ENCODE measurements at regions of chr14 and their contacts with region 1.

Region 1: GRCh38 chr14:73825551-73826188 is 26.0 kb upstream of the PTGR2 start:
- DNase-seq: peak; percentile 91
- ATAC-seq: peak; percentile 79
- H3K4me3 Mint-ChIP-seq: no peak overlapping the region
- H3K27ac Mint-ChIP-seq: no peak overlapping the region
- H3K4me1 Mint-ChIP-seq: peaks cover 18% of the 10 kb centered on the region
- H3K27me3 Mint-ChIP-seq: no peaks in the 10 kb centered on the region

Region 2: DNA sequence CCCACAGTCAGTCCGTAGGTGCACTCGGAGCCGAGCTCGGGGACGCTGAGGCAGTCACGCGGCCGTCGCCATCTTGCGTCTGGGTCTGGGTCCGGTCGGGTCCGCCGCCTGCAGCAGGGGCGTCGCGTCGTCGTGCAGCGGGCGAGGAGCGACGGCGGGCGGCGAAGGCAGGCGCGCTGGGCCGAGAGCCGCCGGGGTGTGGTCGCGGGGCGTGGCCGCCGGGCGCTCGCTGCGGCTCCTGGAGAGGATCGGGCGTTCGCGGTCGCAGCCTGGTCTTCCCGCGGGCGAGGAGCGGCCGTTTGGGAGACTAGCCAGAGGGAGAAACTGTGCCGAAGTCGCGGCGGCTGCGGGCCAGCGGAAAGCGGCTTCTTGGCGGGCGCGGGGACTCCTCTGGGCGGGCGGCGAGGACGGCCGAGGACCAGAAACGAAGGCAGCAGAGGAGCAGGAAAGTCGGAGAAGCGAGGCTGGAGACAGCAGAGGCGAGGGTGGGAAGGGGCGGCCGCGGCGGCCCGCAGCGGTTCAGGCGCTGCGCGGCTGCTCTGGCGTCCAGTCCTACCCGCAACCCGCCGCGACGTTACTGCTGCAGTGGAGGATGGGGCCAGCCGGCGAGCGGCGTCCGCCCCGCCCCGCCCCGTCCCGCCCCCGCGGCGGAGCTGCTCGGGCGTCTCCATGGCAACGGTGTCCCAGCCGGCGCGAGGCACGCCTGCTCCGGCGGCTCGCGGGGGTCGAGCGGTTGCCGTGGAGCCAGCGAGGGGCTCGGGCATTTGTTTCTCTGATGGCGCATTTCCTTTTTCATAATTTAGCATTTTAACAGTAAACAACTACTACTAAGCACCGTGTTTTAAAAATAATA is 111.6 kb before region 1 on chr14 and contains the start of gene PNMA1:
- CTCF ChIA-PET with region 1: interaction called, 3 read pairs
- POLR2A ChIA-PET with region 1: no interaction called
- intact Hi-C with region 1: loop called in 1 of 2 experiments (anchors 5 kb)
- DNase-seq: peak; percentile 92
- ATAC-seq: peak; percentile 79
- H3K4me3 Mint-ChIP-seq: peak within 1 kb of the TSS; percentile 98
- H3K27ac Mint-ChIP-seq: peak within 1 kb of the TSS; percentile 94
- H3K4me1 Mint-ChIP-seq: peaks cover 13% of the 10 kb centered on the region
- H3K27me3 Mint-ChIP-seq: no peaks in the 10 kb centered on the region
- total RNA-seq, gene PNMA1: 23.2 to 28.8 TPM

Region 3: GRCh38 chr14:73741386-73741875 is 84.2 kb before region 1 on chr14:
- CTCF ChIA-PET with region 1: interaction called, 6 read pairs
- POLR2A ChIA-PET with region 1: no interaction called
- intact Hi-C with region 1: loop called in 1 of 2 experiments (anchors 5 kb)
- DNase-seq: peak; percentile 85
- ATAC-seq: peak; percentile 80
- H3K4me3 Mint-ChIP-seq: peak overlapping the region; percentile 66
- H3K27ac Mint-ChIP-seq: peak overlapping the region; percentile 82
- H3K4me1 Mint-ChIP-seq: peaks cover 65% of the 10 kb centered on the region
- H3K27me3 Mint-ChIP-seq: no peaks in the 10 kb centered on the region

Region 4: DNA sequence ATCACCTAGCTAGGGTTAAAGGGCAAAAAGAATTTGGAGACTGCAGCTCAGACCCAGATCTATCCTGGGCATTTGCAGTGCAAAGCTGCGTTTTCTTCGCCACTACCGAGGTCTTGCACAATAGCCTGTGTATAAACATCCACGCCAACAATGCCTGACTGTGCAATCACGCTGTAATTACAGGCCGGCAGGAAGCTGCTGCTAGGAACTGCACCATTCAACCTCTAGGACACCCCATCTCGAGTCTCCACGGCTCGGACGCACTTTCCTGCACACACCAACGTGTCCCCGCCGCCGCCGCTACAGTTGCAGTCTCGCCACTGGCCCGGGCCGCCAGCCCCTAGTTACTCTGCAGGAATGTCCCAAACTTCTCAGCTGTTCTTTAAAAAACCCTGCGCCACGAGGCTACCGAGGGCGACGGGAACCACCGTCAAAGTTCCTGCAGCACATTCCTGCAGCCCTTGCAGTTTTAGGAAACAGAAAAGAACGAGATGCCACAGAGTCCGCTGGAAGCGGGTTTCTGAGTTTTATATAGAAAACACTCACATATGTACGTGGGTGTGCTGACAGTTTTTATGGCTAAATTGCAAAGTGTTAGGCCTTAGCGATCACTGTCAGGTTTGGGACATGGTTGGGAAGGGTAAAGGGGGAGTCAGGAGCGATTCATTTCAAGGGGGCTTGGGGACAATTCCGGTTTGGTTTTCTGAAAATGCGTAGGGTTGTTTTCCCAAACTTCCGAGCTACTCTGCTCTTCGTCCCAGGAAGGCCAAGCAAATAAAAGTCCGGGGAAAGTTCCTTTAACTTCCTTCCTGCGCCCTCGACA is 39.6 kb before region 1 on chr14:
- CTCF ChIA-PET with region 1: no interaction called
- POLR2A ChIA-PET with region 1: no interaction called
- intact Hi-C with region 1: loop called (anchors 2 kb)
- DNase-seq: peak; percentile 81
- ATAC-seq: peak; percentile 67
- H3K4me3 Mint-ChIP-seq: peak overlapping the region; percentile 94
- H3K27ac Mint-ChIP-seq: peak overlapping the region; percentile 93
- H3K4me1 Mint-ChIP-seq: peaks cover 56% of the 10 kb centered on the region
- H3K27me3 Mint-ChIP-seq: no peaks in the 10 kb centered on the region

Region 5: GRCh38 chr14:74038015-74038859 is 212.6 kb after region 1 on chr14:
- CTCF ChIA-PET with region 1: no interaction called
- POLR2A ChIA-PET with region 1: no interaction called
- intact Hi-C with region 1: loop called in 1 of 2 experiments (anchors 5 kb)
- DNase-seq: no peak
- ATAC-seq: peak; percentile 51
- H3K4me3 Mint-ChIP-seq: no peak overlapping the region
- H3K27ac Mint-ChIP-seq: no peak overlapping the region
- H3K4me1 Mint-ChIP-seq: no peaks in the 10 kb centered on the region
- H3K27me3 Mint-ChIP-seq: no peaks in the 10 kb centered on the region